ENCODE measurements at regions of chr6 and their contacts with region 1.

Region 1: DNA sequence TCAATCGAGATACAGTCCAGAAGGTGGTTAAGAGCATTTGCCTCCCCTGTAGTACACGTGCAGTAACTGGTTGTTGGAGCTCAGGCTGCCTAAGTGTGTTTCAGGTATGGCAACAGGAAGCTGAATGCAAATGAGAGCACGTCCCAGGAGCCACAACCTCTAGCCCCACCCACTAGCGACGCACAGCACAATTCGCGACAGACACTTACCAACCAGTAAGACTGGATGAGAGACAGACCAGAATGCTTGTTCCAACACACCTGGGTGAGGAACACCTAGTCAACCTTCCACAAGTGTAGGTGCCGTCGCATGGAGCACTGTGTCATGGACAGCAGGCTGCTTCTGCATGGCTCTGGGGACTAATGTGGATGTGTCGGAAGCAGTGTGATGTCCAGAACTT is 7.2 kb upstream of the SERPINB1 start:
- DNase-seq: peak; percentile 61 to 89 (median 72)
- H3K4me3 ChIP-seq: peak overlapping the region in 1 of 2 donors; percentile 29
- H3K4me3 Mint-ChIP-seq: peak overlapping the region in 6 of 8 donors; percentile 40 to 80 (median 67)
- H3K27ac ChIP-seq: peak overlapping the region; percentile 5
- H3K27ac Mint-ChIP-seq: peak overlapping the region; percentile 66 to 96 (median 90)
- H3K4me1 ChIP-seq: peaks cover 43% of the 10 kb centered on the region
- H3K4me1 Mint-ChIP-seq: peaks cover 23 to 55% (median 42%) of the 10 kb centered on the region in 4 donors
- H3K27me3 ChIP-seq: no peaks in the 10 kb centered on the region
- H3K27me3 Mint-ChIP-seq: no peaks in the 10 kb centered on the region

Region 2: GRCh38 chr6:2791124-2791974 is 57.5 kb before region 1 on chr6:
- CTCF ChIA-PET with region 1: interaction called, 12 read pairs
- POLR2A ChIA-PET with region 1: interaction called, 3 read pairs
- intact Hi-C with region 1: loop called (anchors 1 kb)
- DNase-seq: peak; percentile 41 to 57 (median 53)
- H3K4me3 ChIP-seq: no peak overlapping the region
- H3K4me3 Mint-ChIP-seq: peak overlapping the region in 6 of 8 donors; percentile 17 to 61 (median 40)
- H3K27ac ChIP-seq: no peak overlapping the region
- H3K27ac Mint-ChIP-seq: peak overlapping the region; percentile 36 to 83 (median 68)
- H3K4me1 ChIP-seq: peaks cover 26% of the 10 kb centered on the region
- H3K4me1 Mint-ChIP-seq: peaks cover 22 to 35% (median 26%) of the 10 kb centered on the region in 4 donors
- H3K27me3 ChIP-seq: no peaks in the 10 kb centered on the region
- H3K27me3 Mint-ChIP-seq: no peaks in the 10 kb centered on the region

Region 3: GRCh38 chr6:2876210-2877056 is 27.6 kb after region 1 on chr6:
- CTCF ChIA-PET with region 1: interaction called, 13 read pairs
- POLR2A ChIA-PET with region 1: no interaction called
- intact Hi-C with region 1: loop called (anchors 1 kb)
- DNase-seq: peak in 1 of 5 donors; percentile 20
- H3K4me3 ChIP-seq: peak overlapping the region; percentile 14 to 47
- H3K4me3 Mint-ChIP-seq: peak overlapping the region; percentile 68 to 89 (median 86)
- H3K27ac ChIP-seq: peak overlapping the region; percentile 72
- H3K27ac Mint-ChIP-seq: peak overlapping the region; percentile 89 to 96 (median 95)
- H3K4me1 ChIP-seq: peaks cover 70% of the 10 kb centered on the region
- H3K4me1 Mint-ChIP-seq: peaks cover 66 to 87% (median 76%) of the 10 kb centered on the region in 4 donors
- H3K27me3 ChIP-seq: no peaks in the 10 kb centered on the region
- H3K27me3 Mint-ChIP-seq: no peaks in the 10 kb centered on the region

Region 4: DNA sequence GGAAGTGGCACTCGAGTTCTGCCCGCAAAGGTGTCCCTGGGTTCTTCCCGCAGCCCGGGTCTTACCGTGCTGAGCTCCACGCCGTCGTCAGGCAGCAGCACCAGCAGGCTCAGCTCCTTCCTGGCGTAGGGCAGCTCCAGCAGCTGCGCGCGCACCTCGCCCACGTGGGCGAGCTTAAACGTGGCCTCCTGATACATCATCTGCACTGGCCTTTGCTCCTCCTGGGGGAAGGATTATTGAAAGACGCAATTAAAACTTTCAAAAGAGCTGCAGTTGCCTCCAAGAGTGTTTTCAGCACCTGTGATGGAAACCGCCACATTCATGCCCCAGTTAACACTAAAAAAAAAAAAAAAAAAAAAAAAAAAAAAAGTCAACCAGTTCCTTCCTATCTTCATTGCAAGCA is 42.9 kb after region 1 on chr6:
- CTCF ChIA-PET with region 1: interaction called, 135 read pairs
- POLR2A ChIA-PET with region 1: interaction called, 33 read pairs
- intact Hi-C with region 1: loop called (anchors 1 kb)
- DNase-seq: peak; percentile 79 to 94 (median 85)
- H3K4me3 ChIP-seq: no peak overlapping the region
- H3K4me3 Mint-ChIP-seq: peak overlapping the region; percentile 77 to 88 (median 81)
- H3K27ac ChIP-seq: peak overlapping the region; percentile 49
- H3K27ac Mint-ChIP-seq: peak overlapping the region; percentile 91 to 96 (median 95)
- H3K4me1 ChIP-seq: peaks cover 55% of the 10 kb centered on the region
- H3K4me1 Mint-ChIP-seq: peaks cover 40 to 75% (median 60%) of the 10 kb centered on the region in 4 donors
- H3K27me3 ChIP-seq: no peaks in the 10 kb centered on the region
- H3K27me3 Mint-ChIP-seq: no peaks in the 10 kb centered on the region

Region 5: GRCh38 chr6:2911171-2911570 is 62.3 kb after region 1 on chr6:
- CTCF ChIA-PET with region 1: interaction called, 223 read pairs
- POLR2A ChIA-PET with region 1: interaction called, 59 read pairs
- intact Hi-C with region 1: loop called (anchors 1 kb)
- DNase-seq: no peak
- H3K4me3 ChIP-seq: no peak overlapping the region
- H3K4me3 Mint-ChIP-seq: no peak overlapping the region
- H3K27ac ChIP-seq: no peak overlapping the region
- H3K27ac Mint-ChIP-seq: no peak overlapping the region
- H3K4me1 ChIP-seq: peaks cover 6% of the 10 kb centered on the region
- H3K4me1 Mint-ChIP-seq: peaks cover 15 to 31% (median 22%) of the 10 kb centered on the region in 4 donors
- H3K27me3 ChIP-seq: no peaks in the 10 kb centered on the region
- H3K27me3 Mint-ChIP-seq: no peaks in the 10 kb centered on the region

Region 6: DNA sequence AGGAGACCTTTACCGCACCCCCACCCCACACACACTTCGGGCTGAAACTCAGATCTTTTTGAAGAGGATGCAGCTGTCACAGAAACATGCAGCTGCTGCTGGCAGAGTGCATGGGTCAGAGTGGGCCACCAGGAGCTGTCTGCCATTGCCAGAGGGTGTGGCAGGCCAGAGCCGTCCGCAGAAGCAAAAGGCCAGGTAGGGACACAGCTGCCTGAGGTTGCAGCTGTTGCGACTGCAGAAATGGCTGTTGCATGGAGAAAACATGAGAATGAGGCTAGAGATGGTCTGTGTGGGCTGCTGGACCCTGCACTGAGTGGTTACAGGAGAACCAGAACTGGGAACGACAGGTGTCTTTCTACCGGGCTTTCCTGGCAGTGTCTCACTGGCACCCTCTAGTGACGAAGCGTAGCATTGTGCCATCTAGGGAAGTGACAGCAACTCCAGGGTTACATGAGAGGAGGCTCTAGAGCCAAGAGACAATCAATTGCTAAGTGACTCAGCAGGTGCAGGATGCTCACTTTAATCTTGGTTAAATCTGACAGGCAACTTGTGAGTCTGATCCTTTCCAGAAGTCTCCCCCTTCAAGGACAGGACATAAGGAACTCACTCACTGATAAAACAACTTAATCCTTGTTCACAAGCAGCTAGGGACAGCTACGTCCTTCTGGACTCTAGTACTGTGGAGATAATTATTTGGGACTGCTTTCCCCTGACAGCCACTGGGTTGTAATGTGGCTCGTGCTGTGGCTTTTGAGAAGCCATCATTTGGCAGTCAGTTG is 83.3 kb after region 1 on chr6:
- CTCF ChIA-PET with region 1: interaction called, 186 read pairs
- POLR2A ChIA-PET with region 1: interaction called, 12 read pairs
- intact Hi-C with region 1: loop called (anchors 1 kb)
- DNase-seq: peak; percentile 79 to 87 (median 81)
- H3K4me3 ChIP-seq: no peak overlapping the region
- H3K4me3 Mint-ChIP-seq: peak overlapping the region in 3 of 8 donors; percentile 33 to 53 (median 41)
- H3K27ac ChIP-seq: no peak overlapping the region
- H3K27ac Mint-ChIP-seq: peak overlapping the region in 4 of 7 donors; percentile 4 to 60 (median 41)
- H3K4me1 ChIP-seq: peaks cover 21% of the 10 kb centered on the region
- H3K4me1 Mint-ChIP-seq: peaks cover 18 to 23% (median 22%) of the 10 kb centered on the region in 4 donors
- H3K27me3 ChIP-seq: no peaks in the 10 kb centered on the region
- H3K27me3 Mint-ChIP-seq: no peaks in the 10 kb centered on the region

Measured in CD4-positive, alpha-beta memory T cell (primary cell).